ENCODE measurements at regions of chr13 and their contacts with region 1.

Region 1: DNA sequence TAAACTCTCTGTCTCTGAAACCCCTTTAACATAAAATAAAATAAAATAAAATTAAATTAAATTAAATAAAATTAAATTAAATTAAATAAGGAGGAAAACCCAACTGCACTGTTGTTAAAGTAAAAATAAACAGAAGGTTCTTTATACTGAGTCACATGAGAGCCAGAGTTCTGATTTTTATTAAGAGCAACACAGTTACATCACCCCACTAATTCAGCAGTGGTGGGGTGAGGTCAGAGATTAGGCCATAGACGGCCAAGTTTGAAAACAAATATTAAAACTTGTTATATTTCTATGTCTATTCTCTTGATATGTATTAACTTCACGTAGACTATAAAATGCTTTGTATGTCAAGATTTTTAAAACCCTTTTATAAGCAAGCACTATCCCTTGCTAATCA is 59.5 kb downstream of the MYCBP2 start:
- DNase-seq: no peak
- H3K4me3 ChIP-seq: no peak overlapping the region
- H3K27ac ChIP-seq: no peak overlapping the region
- H3K4me1 ChIP-seq: no peaks in the 10 kb centered on the region
- H3K27me3 ChIP-seq: no peaks in the 10 kb centered on the region
- CTCF ChIP-seq: no peak

Region 2: GRCh38 chr13:76929320-76929719 is 338.0 kb before region 1 on chr13:
- CTCF ChIA-PET with region 1: no interaction called
- POLR2A ChIA-PET with region 1: no interaction called
- intact Hi-C with region 1: no loop called
- DNase-seq: no peak
- H3K4me3 ChIP-seq: no peak overlapping the region
- H3K27ac ChIP-seq: no peak overlapping the region
- H3K4me1 ChIP-seq: no peaks in the 10 kb centered on the region
- H3K27me3 ChIP-seq: no peaks in the 10 kb centered on the region
- CTCF ChIP-seq: no peak

Region 3: GRCh38 chr13:77239312-77239711 is 28.1 kb before region 1 on chr13:
- CTCF ChIA-PET with region 1: no interaction called
- POLR2A ChIA-PET with region 1: no interaction called
- intact Hi-C with region 1: no loop called
- DNase-seq: no peak
- H3K4me3 ChIP-seq: no peak overlapping the region
- H3K27ac ChIP-seq: no peak overlapping the region
- H3K4me1 ChIP-seq: no peaks in the 10 kb centered on the region
- H3K27me3 ChIP-seq: no peaks in the 10 kb centered on the region
- CTCF ChIP-seq: no peak

Region 4: DNA sequence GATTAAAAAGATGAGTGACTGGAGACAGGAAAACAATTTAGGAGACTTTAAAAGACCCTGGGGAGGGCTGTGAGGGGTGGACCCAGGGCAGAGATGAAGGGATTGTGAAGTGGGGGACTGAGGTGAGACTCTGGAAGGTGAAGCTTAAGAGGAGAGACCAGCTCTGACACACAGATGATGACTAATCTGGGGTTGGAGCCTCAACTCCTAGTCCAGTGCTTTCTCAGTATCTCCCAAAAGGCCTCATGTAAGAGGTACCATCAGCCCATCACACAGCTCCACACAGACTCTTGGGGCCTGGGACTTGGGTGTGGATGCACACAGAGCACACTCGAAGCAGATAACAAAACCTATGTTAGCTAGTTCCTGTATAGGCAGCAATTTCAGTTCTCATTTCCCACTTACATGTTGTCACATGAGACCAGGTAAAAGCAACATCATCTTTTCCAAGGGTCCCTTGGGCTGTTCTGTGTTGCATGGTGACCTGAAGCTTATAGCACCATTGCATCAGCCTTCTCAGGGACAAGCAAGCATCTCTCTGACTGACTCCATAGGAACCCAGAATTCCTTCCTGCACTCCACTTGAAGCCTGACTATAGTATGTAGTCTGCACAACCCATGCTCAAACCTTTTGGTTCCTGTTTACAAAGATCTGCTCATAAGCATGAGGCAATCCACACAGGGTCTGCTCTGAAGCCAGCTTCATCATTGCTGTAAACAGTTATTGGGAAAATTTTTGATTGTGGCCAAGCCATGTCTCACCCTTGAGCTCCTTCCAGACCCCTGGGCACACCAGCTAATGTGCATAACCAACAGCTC is 148.1 kb after region 1 on chr13:
- CTCF ChIA-PET with region 1: no interaction called
- POLR2A ChIA-PET with region 1: interaction called, 16 read pairs
- intact Hi-C with region 1: no loop called
- DNase-seq: no peak
- H3K4me3 ChIP-seq: no peak overlapping the region
- H3K27ac ChIP-seq: no peak overlapping the region
- H3K4me1 ChIP-seq: peaks cover 18% of the 10 kb centered on the region; the same call in 1 of the 2 replicates
- H3K27me3 ChIP-seq: no peaks in the 10 kb centered on the region
- CTCF ChIP-seq: no peak